Mammary epithelial cell (primary cell): ENCODE measurements at regions of chr16 and their contacts with region 1.

Region 1: GRCh38 chr16:58755989-58756649 is 22.0 kb upstream of the GOT2 start:
- DNase-seq: peak; percentile 58
- H3K4me3 ChIP-seq: no peak overlapping the region
- H3K27ac ChIP-seq: no peak overlapping the region
- H3K4me1 ChIP-seq: no peaks in the 10 kb centered on the region
- H3K27me3 ChIP-seq: no peaks in the 10 kb centered on the region
- CTCF ChIP-seq: peak; percentile 70 to 91

Region 2: DNA sequence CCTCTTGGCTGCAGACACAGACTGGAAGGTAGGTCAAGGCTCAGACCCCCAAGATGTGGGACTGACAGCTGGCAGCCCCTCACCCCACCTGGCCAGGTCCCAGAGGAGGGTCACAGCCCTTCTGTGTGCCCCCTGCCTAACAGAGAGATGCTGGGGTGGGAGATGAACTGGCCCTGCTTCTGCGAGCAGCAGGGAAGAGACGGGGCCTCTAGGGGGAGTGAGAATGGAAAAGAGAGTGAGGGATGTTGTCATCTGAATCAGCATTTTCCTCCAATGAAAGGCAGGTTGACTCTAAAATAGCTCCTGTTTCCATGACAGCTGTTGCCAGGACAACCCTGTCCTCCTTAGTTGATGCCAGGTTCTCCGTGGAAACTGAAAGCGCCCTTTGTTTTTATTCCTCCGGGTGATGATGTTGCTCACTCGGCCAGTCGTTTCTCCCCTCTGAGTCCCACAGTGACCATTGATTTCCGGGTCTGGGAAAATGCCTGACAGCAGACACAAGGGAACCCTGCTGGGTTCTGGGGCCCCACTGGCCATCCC is 261.1 kb before region 1 on chr16:
- CTCF ChIA-PET with region 1: no interaction called
- dilution Hi-C with region 1: no loop called
- in situ Hi-C with region 1: no loop called
- intact Hi-C with region 1: loop called (anchors 5 kb)
- DNase-seq: peak; percentile 96
- H3K4me3 ChIP-seq: no peak overlapping the region
- H3K27ac ChIP-seq: no peak overlapping the region
- H3K4me1 ChIP-seq: no peaks in the 10 kb centered on the region
- H3K27me3 ChIP-seq: no peaks in the 10 kb centered on the region
- CTCF ChIP-seq: peak; percentile 42 to 52

Region 3: DNA sequence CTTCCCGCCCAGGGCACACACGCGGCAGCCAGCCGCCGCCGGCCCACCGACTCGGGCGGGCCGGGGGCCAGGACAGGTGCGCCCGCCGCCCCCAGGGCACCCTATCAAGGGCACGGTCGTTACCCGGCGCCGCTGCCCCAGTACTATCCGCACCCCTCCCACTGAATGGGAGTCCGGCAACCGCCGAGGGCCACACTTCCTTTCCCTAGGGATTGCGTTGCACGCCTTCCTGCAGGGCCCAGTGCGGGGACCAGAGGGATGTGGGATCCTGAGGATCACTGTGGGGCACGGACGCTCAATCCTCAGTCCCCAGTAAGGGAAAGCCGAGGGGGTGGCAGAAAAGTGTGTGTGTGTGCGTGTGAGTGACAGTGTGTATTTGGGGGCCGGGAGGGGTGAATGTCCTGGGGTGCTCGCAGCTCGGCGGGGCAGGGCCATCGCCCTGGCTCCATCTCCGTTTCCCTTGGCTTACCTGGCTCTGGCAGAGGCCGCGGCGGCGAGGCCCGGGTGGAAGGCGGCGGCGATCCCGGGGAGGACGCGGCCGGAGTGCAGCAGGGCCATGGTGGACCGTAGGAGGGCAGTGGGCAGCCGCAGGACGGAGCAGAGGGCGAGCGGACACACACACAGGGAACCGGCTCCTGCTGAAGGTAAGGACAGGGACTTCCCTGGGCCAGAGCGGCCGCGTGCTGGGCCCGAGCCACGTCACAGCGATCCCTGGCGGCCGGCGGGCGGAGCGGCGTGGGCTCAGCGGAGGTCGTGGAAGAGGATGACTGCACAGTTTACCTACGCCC is 22.3 kb before region 1 on chr16 and contains the start of gene GOT2:
- CTCF ChIA-PET with region 1: no interaction called
- dilution Hi-C with region 1: no loop called
- in situ Hi-C with region 1: no loop called
- intact Hi-C with region 1: loop called (anchors 1 kb)
- DNase-seq: peak; percentile 90
- H3K4me3 ChIP-seq: peak within 1 kb of the TSS; percentile 79 to 94 (median 89)
- H3K27ac ChIP-seq: peak within 1 kb of the TSS; percentile 62
- H3K4me1 ChIP-seq: peaks cover 24% of the 10 kb centered on the region
- H3K27me3 ChIP-seq: no peaks in the 10 kb centered on the region
- CTCF ChIP-seq: peak; percentile 83 to 96
- total RNA-seq, gene GOT2: 74.7 to 160 TPM

Region 4: DNA sequence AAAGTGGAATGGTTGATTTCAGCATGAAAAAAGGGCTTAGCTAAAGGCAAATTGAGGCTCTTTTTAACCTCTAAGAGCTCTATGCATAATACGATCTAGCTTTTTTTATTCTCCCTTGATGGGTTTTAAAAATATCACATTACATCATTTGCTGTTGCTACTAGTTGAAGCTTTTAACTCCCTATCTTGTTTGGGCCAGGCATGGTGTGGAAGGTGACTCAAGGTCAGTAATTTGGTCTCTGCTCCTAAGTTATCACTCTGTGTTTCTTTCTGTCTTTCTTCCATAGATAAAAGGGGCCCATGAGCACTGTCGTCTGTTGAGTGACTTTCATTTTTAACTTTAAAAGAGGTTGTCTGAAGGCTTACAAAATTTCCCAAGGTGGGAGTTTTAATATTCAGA is 36.1 kb after region 1 on chr16:
- CTCF ChIA-PET with region 1: no interaction called
- dilution Hi-C with region 1: no loop called
- in situ Hi-C with region 1: no loop called
- intact Hi-C with region 1: no loop called
- DNase-seq: no peak
- H3K4me3 ChIP-seq: no peak overlapping the region
- H3K27ac ChIP-seq: no peak overlapping the region
- H3K4me1 ChIP-seq: no peaks in the 10 kb centered on the region
- H3K27me3 ChIP-seq: no peaks in the 10 kb centered on the region
- CTCF ChIP-seq: no peak

Region 5: GRCh38 chr16:58866935-58867334 is 110.8 kb after region 1 on chr16:
- CTCF ChIA-PET with region 1: no interaction called
- dilution Hi-C with region 1: no loop called
- in situ Hi-C with region 1: no loop called
- intact Hi-C with region 1: no loop called
- DNase-seq: no peak
- H3K4me3 ChIP-seq: no peak overlapping the region
- H3K27ac ChIP-seq: no peak overlapping the region
- H3K4me1 ChIP-seq: no peaks in the 10 kb centered on the region
- H3K27me3 ChIP-seq: no peaks in the 10 kb centered on the region
- CTCF ChIP-seq: no peak